Activated T-helper 2 cell treated with anti-CD3 and anti-CD28 coated beads, Interferon-gamma antibody, Interleukin-2, Interleukin-4, amounts not matched to agents 10 μg/mL and 5 μg/mL and 100 μg/mL, durations not matched to agents 14 hours and 24 hours and 36 hours (primary cell): ENCODE measurements at regions of chr3 and their contacts with region 1.

Region 1: DNA sequence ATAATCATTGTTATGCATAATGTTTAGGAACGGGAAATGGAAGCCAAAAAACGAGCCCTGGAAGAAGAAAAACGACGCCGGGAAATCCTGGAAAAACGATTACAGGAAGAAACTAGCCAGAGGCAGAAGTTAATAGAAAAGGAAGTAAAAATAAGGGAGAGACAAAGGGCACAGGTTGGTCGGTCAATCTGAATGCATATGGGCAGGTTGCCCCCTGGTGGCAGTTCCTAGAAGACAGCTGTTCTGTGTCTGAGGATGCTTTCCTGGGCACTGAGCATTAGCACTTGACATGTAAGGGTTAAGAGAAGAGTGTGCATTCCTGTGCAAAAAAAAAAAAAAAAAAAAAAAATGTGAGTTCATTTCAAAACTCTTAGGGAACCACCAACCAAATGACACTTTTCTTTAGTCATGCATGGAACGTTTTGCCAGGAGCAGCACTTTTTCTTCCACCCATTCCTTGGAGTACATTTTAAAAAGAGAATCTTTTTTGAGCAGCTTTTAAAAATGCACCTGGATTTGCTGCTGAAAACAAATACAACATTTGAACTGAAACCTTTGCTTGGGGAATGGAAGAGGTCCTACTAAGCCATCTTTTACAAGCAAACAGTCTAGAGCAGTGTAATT is 11.1 kb upstream of the ABHD10 start:
- DNase-seq: peak; percentile 67
- H3K4me3 Mint-ChIP-seq: no peak overlapping the region
- H3K27ac Mint-ChIP-seq: no peak overlapping the region
- H3K4me1 Mint-ChIP-seq: peaks cover 17% of the 10 kb centered on the region
- H3K27me3 Mint-ChIP-seq: peaks cover 6% of the 10 kb centered on the region

Region 2: DNA sequence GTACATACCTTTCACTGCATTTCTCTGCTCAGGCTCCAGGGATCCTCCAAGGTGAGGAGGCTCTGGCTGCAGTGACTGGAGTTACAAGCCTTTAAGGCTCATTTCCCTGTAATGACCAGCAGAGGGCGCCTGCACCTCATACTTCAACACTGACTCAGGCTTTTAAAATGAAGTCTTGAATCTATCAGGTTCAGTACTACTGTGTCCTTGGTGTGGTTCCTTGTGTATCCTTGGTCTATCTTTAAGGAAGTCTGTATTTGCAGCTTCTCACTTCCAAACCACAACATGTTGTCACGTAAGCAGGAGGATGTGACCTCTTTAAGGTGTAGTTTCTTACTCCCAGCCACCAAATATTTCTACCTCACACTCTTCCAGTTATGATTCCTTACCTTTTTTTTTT is 250.2 kb before region 1 on chr3:
- intact Hi-C with region 1: loop called (anchors 1 kb)
- DNase-seq: peak; percentile 45
- H3K4me3 Mint-ChIP-seq: no peak overlapping the region
- H3K27ac Mint-ChIP-seq: no peak overlapping the region
- H3K4me1 Mint-ChIP-seq: peaks cover 1% of the 10 kb centered on the region
- H3K27me3 Mint-ChIP-seq: no peaks in the 10 kb centered on the region

Region 3: DNA sequence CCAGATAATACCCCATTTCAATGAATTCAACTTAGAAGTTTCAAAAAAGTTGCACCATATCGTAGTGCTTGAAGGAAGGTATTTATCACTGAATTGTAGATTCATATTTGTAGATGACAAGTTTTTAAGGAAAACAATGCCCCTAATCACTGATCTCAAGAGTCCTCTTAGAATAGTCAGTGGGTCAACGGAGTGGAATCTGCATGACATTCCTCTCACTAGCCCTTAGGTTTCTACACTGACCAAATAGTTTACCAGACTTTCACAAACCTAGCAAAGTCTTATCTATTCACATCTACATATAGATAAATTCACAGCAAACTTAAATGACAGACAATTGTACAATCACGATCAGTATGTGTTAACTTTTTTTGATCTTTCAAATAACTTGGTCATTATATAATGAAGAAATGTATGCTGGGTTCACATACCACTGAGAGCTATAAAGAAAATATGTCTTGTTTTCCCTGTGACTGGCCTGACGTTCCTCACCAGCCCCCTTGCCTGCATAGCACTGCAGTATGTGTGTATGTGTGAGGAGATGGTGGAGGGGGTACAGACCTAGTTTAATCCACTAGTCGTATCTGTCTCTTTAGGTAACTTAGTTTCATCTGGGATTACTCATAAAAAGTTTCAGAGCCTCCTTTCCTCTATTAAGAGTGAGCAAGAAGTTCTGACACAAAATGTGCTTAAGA is 144.3 kb before region 1 on chr3:
- intact Hi-C with region 1: no loop called
- DNase-seq: no peak
- H3K4me3 Mint-ChIP-seq: no peak overlapping the region
- H3K27ac Mint-ChIP-seq: no peak overlapping the region
- H3K4me1 Mint-ChIP-seq: peaks cover 7% of the 10 kb centered on the region
- H3K27me3 Mint-ChIP-seq: no peaks in the 10 kb centered on the region

Region 4: GRCh38 chr3:111895079-111895478 is 72.7 kb before region 1 on chr3:
- intact Hi-C with region 1: loop called (anchors 1 kb)
- DNase-seq: no peak
- H3K4me3 Mint-ChIP-seq: no peak overlapping the region
- H3K27ac Mint-ChIP-seq: no peak overlapping the region
- H3K4me1 Mint-ChIP-seq: peaks cover 5% of the 10 kb centered on the region
- H3K27me3 Mint-ChIP-seq: no peaks in the 10 kb centered on the region

Region 5: GRCh38 chr3:112350181-112350825 is 382.5 kb after region 1 on chr3:
- intact Hi-C with region 1: no loop called
- DNase-seq: no peak
- H3K4me3 Mint-ChIP-seq: no peak overlapping the region
- H3K27ac Mint-ChIP-seq: peak overlapping the region; percentile 74
- H3K4me1 Mint-ChIP-seq: peaks cover 64% of the 10 kb centered on the region
- H3K27me3 Mint-ChIP-seq: no peaks in the 10 kb centered on the region

Region 6: GRCh38 chr3:112411425-112411824 is 443.7 kb after region 1 on chr3:
- intact Hi-C with region 1: no loop called
- DNase-seq: no peak
- H3K4me3 Mint-ChIP-seq: no peak overlapping the region
- H3K27ac Mint-ChIP-seq: no peak overlapping the region
- H3K4me1 Mint-ChIP-seq: peaks cover 29% of the 10 kb centered on the region
- H3K27me3 Mint-ChIP-seq: peaks cover 6% of the 10 kb centered on the region